Mammary epithelial cell (primary cell): ENCODE measurements at regions of chr4 and their contacts with region 1.

Region 1: GRCh38 chr4:624705-625590 is at the start of gene PDE6B:
- DNase-seq: no peak
- H3K4me3 ChIP-seq: no peak within 1 kb of the TSS
- H3K27ac ChIP-seq: no peak within 1 kb of the TSS
- H3K4me1 ChIP-seq: no peaks in the 10 kb centered on the region
- H3K27me3 ChIP-seq: no peaks in the 10 kb centered on the region
- CTCF ChIP-seq: no peak
- total RNA-seq, gene PDE6B: 3.2 TPM in 1 of 2 donors, not detected in the other

Region 2: GRCh38 chr4:526189-526909 is 98.6 kb before region 1 on chr4:
- CTCF ChIA-PET with region 1: no interaction called
- dilution Hi-C with region 1: loop called (anchors 5 kb)
- in situ Hi-C with region 1: no loop called
- intact Hi-C with region 1: no loop called
- DNase-seq: no peak
- H3K4me3 ChIP-seq: no peak overlapping the region
- H3K27ac ChIP-seq: no peak overlapping the region
- H3K4me1 ChIP-seq: no peaks in the 10 kb centered on the region
- H3K27me3 ChIP-seq: no peaks in the 10 kb centered on the region
- CTCF ChIP-seq: no peak

Region 3: GRCh38 chr4:573122-573892 is 51.6 kb before region 1 on chr4:
- CTCF ChIA-PET with region 1: no interaction called
- dilution Hi-C with region 1: loop called (anchors 5 kb)
- in situ Hi-C with region 1: no loop called
- intact Hi-C with region 1: no loop called
- DNase-seq: no peak
- H3K4me3 ChIP-seq: no peak overlapping the region
- H3K27ac ChIP-seq: no peak overlapping the region
- H3K4me1 ChIP-seq: peaks cover 10% of the 10 kb centered on the region
- H3K27me3 ChIP-seq: peaks cover 30% of the 10 kb centered on the region
- CTCF ChIP-seq: no peak

Region 4: GRCh38 chr4:592825-593520 is 32.0 kb before region 1 on chr4:
- CTCF ChIA-PET with region 1: no interaction called
- dilution Hi-C with region 1: no loop called
- in situ Hi-C with region 1: no loop called
- intact Hi-C with region 1: no loop called
- DNase-seq: no peak
- H3K4me3 ChIP-seq: no peak overlapping the region
- H3K27ac ChIP-seq: no peak overlapping the region
- H3K4me1 ChIP-seq: no peaks in the 10 kb centered on the region
- H3K27me3 ChIP-seq: no peaks in the 10 kb centered on the region
- CTCF ChIP-seq: no peak

Region 5: DNA sequence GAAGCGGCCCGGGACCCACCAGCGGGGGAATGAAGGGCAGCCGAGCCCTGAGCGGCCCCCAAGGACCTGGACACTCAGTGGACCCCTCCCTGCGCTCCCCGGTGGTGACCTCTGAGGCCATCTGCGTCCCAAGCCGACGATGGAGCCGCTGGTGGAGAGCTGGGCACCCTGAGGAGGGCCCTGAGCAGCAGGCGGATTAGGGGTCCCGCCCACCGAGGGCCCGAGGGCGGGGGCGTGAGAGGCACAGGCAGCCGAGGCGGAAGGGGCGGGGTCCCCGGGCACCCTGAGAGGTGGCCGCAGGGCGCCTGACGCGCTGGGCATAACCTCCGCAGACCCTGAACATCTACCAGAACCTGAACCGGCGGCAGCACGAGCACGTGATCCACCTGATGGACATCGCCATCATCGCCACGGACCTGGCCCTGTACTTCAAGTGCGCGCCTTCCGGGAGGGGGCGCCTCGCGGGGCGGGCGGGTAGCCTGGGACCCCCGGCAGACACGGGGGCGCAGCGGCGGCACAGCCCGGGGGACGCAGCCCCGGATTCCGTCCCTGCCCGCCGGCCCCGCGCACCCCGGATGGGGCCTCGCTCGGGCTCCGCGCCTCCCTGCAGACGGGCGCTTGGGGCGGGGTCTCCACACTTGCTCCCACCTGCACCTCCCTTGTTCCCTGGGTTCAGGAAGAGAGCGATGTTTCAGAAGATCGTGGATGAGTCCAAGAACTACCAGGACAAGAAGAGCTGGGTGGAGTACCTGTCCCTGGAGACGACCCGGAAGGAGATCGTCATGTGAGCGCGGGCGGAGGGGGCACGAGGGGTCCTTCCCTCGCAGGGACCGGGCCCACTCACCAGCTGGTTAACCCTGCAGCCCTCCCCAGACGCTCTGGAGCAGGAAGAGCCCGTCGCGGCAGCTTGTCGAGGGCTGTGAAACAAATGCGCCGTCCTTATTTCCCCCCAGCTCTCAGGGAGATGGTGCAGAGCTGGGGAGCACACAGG is 38.8 kb after region 1 on chr4:
- CTCF ChIA-PET with region 1: no interaction called
- dilution Hi-C with region 1: no loop called
- in situ Hi-C with region 1: no loop called
- intact Hi-C with region 1: no loop called
- DNase-seq: no peak
- H3K4me3 ChIP-seq: no peak overlapping the region
- H3K27ac ChIP-seq: no peak overlapping the region
- H3K4me1 ChIP-seq: peaks cover 4% of the 10 kb centered on the region
- H3K27me3 ChIP-seq: peaks cover 7% of the 10 kb centered on the region
- CTCF ChIP-seq: no peak

Region 6: DNA sequence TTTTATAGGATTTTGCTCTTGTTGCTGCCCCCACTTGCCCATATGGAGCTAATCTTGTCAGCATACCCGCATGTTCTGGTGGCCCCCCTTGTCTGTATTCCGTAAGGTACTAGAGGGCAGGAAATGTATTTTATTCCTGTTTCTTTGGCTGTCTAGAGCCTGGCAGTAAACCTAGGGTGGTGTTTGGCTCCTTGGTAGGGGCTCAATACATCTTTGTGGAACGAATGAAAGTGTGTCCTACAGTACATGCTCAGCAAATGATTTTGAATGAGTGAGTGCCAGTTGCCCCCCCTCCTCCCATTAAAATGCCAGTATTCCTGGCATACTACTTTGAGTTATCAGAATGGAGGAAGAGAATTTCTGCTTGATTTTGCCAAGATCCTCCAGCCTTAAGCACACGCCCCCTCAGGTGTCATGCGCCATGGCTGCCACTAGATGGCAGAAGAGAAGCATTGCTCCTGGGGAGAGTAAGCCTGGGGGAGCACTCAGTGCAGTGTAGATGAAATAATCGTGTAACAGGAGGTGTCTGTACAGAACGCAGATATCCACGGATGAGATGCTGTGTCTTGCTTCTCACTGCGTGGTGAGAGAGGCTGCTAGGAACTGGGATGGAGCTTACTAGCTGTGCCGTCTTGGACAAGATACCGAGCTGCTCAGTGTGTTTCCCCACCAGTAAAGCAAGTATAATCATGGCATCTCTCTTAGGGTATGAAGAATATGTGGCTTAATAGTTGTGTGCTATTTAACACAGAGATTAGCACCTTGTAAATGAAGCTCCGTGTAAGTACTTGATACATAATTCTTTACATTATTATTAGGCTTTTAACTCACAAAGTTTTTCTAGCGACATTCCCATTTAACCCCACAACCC is 505.6 kb after region 1 on chr4:
- CTCF ChIA-PET with region 1: no interaction called
- dilution Hi-C with region 1: no loop called
- in situ Hi-C with region 1: no loop called
- intact Hi-C with region 1: no loop called
- DNase-seq: peak; percentile 60
- H3K4me3 ChIP-seq: no peak overlapping the region
- H3K27ac ChIP-seq: no peak overlapping the region
- H3K4me1 ChIP-seq: no peaks in the 10 kb centered on the region
- H3K27me3 ChIP-seq: no peaks in the 10 kb centered on the region
- CTCF ChIP-seq: peak; percentile 99 to 100